ENCODE measurements at regions of chr2 and their contacts with region 1.

Region 1: DNA sequence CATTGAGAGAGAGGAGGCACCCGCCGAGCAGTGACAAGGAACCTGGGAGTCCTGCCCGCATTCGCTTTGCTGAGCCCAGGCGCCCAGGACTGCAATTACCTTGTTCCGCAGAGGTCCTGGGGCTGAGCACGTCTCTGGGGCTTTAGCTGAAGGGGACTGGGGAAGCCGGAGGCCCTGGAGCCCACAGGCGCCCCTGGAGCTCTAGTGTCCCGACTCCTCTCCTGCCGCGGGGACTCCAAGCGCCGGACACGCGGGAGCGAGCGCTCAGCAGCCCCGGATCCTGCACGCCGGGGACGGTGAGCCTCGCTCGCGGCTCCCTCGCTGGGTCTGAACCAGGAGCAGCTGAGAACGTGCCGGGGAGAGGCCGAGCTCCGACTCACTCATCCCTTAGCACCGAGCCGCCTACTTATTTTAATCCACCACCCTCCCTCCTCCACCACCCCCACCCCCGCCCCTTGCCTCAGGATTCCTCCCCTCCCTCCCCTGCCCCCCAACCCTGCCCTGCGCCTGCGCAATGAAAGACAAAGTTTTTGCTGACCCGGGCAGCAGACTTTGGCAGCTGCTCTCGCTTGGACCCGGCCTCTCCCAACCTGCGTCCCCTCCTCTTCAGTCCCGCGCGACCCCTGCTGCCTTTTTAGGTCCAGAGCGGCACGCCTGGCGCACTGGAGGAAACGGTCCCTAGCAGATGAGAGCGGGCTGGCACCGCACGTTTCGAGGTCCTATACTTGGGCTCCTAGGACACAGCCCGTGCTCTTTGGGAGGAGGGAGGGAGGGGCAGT is at the start of gene OSR1:
- DNase-seq: peak; percentile 76
- H3K4me3 ChIP-seq: peak within 1 kb of the TSS; percentile 93
- H3K27ac ChIP-seq: peak within 1 kb of the TSS; percentile 77
- H3K27me3 ChIP-seq: no peaks in the 10 kb centered on the region
- CTCF ChIP-seq: no peak
- polyA plus RNA-seq, gene OSR1: 13.5 and 14.0 TPM in 2 replicates

Region 2: DNA sequence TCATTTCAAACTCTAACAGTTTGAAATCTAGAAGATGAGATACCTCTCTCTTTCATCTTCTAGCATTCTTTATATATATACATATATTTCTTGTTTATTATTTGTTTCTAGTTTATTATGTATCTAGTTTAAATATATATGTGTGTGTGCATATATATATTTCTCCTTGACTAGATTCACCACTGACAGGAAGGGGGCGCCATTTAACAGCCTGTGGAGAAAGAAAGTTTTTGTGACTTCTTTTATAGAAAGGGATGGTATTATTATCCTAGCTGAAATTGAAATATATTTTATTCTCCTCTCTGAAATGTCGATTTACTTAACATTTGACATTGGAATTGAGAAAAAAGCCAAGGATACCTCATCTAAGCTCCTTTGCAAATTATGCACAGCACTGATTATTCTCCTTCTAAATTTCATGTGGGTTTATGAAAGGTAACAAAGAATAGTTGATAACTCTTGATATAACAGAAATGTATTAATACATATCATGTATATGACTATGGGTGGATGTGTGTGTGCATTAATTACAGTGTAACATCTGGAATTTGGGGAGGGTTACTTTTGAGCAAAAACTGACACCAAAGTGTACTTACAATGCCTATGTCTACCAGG is 608.4 kb before region 1 on chr2:
- CTCF ChIA-PET with region 1: interaction called, 20 read pairs
- POLR2A ChIA-PET with region 1: no interaction called
- DNase-seq: no peak
- H3K4me3 ChIP-seq: no peak overlapping the region
- H3K27ac ChIP-seq: no peak overlapping the region
- H3K27me3 ChIP-seq: no peaks in the 10 kb centered on the region
- CTCF ChIP-seq: peak; percentile 84

Region 3: DNA sequence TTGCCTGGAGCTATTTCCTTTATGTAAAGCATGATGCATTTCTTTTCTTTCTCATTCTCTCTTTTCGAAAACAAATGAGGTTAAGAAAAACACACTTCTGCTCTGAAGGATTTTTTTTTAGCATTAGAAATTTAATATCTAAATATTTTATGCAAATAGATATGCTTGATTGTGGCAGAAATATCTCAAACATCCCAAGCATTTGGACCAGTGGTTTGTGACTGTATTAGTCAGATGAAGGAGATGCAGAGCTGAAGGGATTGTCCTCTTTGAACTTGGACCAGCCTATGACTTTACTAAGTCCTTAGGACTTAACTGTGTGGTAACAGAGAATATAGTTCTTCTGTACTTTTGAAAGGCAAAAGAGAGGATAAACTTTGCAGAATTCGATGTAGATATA is 433.1 kb before region 1 on chr2:
- CTCF ChIA-PET with region 1: interaction called, 3 read pairs
- POLR2A ChIA-PET with region 1: interaction called, 12 read pairs
- DNase-seq: peak; percentile 81
- H3K4me3 ChIP-seq: no peak overlapping the region
- H3K27ac ChIP-seq: no peak overlapping the region
- H3K27me3 ChIP-seq: no peaks in the 10 kb centered on the region
- CTCF ChIP-seq: no peak

Region 4: DNA sequence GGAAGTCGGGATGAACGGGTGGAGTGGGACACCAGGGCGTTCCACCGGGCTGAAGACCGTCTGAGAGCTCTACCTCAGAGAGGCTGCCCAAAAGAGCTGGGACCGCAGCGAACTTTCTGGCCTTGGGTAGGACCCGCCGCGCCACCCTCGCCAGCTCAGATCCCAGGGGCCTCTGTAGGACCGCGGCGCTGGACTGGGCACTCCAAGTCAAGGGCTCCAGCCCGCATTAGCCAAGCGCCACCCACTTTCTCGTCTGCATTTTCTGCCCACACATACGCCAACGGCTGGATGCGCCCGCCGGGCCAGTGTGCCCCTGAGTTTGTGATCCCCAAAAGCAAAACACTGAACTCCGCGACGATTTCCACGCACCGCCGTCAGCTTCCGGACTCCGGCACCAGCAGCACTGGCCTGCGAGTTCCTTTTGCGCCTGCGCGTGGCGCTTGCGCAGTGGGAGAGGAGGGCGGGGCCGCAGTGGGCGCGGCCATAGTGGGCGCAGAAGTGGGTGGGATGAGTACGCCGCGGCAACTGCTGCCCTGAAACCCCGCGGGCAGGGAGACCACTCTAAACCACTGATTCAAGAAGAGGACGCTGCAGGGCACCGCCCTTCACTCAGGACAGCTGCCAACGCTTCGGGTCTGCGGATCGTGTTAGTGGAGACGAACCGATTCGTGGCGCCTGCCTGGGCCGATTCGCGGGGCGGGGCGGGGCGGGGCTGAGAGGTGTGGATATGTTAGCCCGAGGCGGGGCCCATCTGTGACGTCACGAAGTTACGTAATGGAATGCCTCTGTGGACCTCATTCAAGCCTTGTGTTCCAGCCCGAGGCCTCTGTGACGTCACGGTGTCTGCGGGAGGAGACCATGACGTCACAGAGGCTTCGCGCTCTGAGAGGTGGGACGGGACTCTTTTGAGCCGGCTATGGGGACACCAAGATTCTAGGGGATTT is 10.5 kb before region 1 on chr2:
- CTCF ChIA-PET with region 1: interaction called, 3 read pairs
- POLR2A ChIA-PET with region 1: interaction called, 18 read pairs
- DNase-seq: peak; percentile 93
- H3K4me3 ChIP-seq: peak overlapping the region; percentile 96
- H3K27ac ChIP-seq: peak overlapping the region; percentile 92
- H3K27me3 ChIP-seq: no peaks in the 10 kb centered on the region
- CTCF ChIP-seq: no peak

Measured in AG04450 (cell line).